ENCODE measurements at regions of chr2 and their contacts with region 1.

Region 1: GRCh38 chr2:112606488-112606902 is 22.1 kb downstream of the CHCHD5 start:
- DNase-seq: no peak
- H3K4me3 ChIP-seq: no peak overlapping the region
- H3K27ac ChIP-seq: no peak overlapping the region
- H3K4me1 ChIP-seq: no peaks in the 10 kb centered on the region
- H3K27me3 ChIP-seq: no peaks in the 10 kb centered on the region
- CTCF ChIP-seq: no peak
- POLR2A ChIP-seq: no peak

Region 2: DNA sequence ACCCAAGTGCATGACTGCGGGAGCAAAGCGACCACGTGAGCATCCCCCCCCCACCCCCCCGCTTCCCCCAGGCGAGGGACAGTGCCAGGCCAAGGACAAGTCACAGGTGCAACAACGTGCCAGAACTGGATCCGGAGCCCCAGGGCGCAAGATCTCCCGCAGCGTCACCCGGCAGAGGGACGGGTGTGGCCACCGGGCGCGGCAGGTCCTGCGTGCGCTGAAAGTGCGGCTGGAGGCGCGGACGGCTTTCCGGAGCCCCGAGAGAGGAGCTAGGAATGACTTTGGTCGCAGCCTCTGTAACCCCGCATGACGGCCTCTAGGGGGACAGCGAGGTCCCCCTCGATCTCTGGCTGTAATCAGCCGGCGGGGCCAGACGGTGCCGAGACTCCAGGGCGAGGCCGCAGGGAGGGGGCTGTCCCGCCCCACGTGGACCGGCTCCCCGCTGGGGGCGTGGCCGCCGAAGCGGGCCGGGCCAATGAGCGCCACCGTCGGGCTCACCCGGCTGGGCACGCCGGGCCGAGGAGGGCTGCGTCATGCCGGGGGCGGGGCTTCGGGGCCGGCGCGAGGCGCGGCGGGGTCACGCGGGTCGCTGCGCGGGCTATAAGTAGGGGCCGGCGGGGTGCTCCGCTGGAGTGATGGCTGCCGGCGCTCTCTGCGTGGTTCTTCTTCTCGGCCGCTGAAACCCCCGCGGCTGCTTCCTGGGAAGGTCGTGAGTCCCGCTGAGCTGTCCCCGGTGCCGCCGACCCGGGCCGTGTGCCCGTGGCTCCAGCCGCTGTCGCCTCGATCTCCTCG is 39.0 kb after region 1 on chr2 and contains the start of gene SLC20A1:
- CTCF ChIA-PET with region 1: interaction called, 29 read pairs
- POLR2A ChIA-PET with region 1: interaction called, 7 read pairs
- dilution Hi-C with region 1: no loop called
- intact Hi-C with region 1: no loop called
- DNase-seq: peak; percentile 91
- H3K4me3 ChIP-seq: peak within 1 kb of the TSS; percentile 84 to 90 (median 89)
- H3K27ac ChIP-seq: peak within 1 kb of the TSS; percentile 90
- H3K4me1 ChIP-seq: peaks cover 71% of the 10 kb centered on the region
- H3K27me3 ChIP-seq: no peaks in the 10 kb centered on the region
- CTCF ChIP-seq: peak; percentile 38 to 40
- POLR2A ChIP-seq: peak; percentile 98
- total RNA-seq, gene SLC20A1: 141 and 149 TPM in 2 replicates

Region 3: GRCh38 chr2:112958428-112959108 is 352.1 kb after region 1 on chr2:
- CTCF ChIA-PET with region 1: no interaction called
- POLR2A ChIA-PET with region 1: no interaction called
- dilution Hi-C with region 1: no loop called
- intact Hi-C with region 1: loop called (anchors 5 kb)
- DNase-seq: peak; percentile 51
- H3K4me3 ChIP-seq: no peak overlapping the region
- H3K27ac ChIP-seq: no peak overlapping the region
- H3K4me1 ChIP-seq: no peaks in the 10 kb centered on the region
- H3K27me3 ChIP-seq: peaks cover 15 to 20% of the 10 kb centered on the region in 2 experiments
- CTCF ChIP-seq: peak; percentile 84 to 90
- POLR2A ChIP-seq: no peak

Measured in endothelial cell of umbilical vein (primary cell).